GM12878 (cell line): ENCODE measurements at regions of chr7 and their contacts with region 1.

Region 1: DNA sequence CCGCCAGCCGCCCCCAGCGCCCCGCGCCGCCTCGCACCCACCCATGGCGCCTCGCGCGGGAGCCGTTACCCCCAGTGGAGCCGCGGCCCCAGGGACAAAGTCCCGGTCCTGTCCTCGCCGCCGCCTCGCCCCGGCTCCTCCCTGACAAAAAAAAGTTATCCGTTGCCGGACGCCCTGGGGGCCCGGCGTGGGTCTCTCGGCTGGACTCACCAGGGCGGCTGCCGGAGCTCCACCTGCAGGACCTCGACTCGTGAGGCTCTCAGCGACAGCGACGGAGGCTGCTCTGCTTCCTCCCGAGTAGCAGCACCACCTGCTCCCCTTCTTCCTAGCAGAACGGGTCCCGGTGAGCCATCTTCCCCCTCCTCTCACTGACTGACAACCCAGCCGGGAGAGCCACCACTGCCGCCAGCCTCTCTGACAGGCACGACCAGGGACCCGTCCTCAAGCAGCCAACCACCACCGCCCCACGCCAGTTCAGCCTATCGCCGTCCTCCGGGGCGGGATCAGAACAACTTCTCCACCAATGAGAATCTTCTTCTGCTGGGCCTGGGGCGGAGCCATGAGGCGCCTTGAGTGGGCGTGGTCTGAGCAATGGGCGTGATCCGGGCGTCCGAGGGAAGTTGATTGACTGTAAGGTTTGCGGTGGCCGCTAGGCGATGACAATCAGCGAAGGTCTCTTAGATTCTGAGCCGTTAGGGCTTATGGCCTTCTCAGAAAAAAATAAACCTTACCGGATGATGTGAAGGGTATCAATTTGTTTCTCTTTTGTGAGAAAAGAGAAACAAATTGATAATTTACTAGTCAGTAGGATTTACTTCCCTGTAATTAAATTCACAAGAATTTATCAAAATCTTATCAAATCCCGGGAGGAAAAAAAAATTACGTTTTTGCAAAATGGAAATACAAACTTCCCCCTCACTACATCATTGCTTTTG is at the start of gene HYCC1:
- DNase-seq: peak; percentile 98
- ATAC-seq: peak; percentile 94
- H3K4me3 ChIP-seq: peak within 1 kb of the TSS; percentile 95
- H3K27ac ChIP-seq: peak within 1 kb of the TSS; percentile 74
- H3K4me1 ChIP-seq: peaks cover 20% of the 10 kb centered on the region
- H3K27me3 ChIP-seq: no peaks in the 10 kb centered on the region
- CTCF ChIP-seq: peak; percentile 62 to 64 (median 64)
- EP300 ChIP-seq: no peak
- POLR2A ChIP-seq: peak; percentile 99
- RAD21 ChIP-seq: peak; percentile 34; the same call in 1 of the 2 replicates
- polyA plus RNA-seq, gene HYCC1: 8.5 to 9.9 TPM

Region 2: DNA sequence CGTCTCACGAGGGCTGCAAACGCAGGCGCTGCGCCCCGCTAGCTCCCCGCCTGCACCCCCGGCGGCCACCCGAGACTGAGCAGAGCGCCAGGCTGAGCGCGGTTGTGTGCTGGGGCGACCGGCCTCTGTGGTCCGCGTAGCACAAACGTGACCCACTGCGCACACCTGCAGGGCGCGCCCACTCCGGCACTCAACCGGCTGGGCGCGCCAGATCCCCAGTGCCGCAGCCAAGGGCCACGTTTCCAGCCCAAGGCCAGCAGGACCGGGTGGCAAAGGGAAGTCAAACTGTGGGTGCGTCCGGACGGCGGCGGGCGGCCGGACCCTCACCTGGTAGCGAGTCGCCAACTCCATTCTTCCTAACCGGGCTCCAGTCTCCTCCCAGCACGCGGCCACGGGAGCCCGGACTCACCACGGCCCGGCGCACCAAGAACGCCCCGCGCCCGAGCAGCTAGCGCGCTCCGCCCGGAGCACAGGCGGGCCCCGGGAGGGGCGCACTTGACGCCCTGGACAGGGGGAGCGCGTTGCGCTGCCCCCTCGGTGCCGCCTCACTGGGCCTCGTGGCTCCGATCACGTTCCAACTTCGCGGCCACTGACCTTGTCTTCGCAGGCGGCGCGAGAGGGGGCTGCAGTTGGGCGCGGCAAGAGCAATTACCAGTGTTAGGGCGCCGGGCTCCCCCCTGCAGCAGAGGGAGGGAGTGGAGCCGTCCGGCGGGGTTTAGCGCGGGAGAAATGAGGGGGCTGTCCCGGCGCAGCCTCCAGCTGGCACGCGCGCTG is 1068.3 kb before region 1 on chr7 and contains the start of gene CDCA7L:
- CTCF ChIA-PET with region 1: no interaction called
- POLR2A ChIA-PET with region 1: no interaction called
- RAD21 ChIA-PET with region 1: no interaction called
- SMC1A ChIA-PET with region 1: no interaction called
- in situ Hi-C with region 1: loop called (anchors 10 kb)
- intact Hi-C with region 1: no loop called
- DNase-seq: peak; percentile 32
- ATAC-seq: peak; percentile 85
- H3K4me3 ChIP-seq: peak within 1 kb of the TSS; percentile 80
- H3K27ac ChIP-seq: peak within 1 kb of the TSS; percentile 85
- H3K4me1 ChIP-seq: peaks cover 44% of the 10 kb centered on the region
- H3K27me3 ChIP-seq: no peaks in the 10 kb centered on the region
- CTCF ChIP-seq: 0 out of 6 replicates have a peak, but pooled peaks of 1 of the 3 experiments have one; percentile 2
- EP300 ChIP-seq: no peak
- POLR2A ChIP-seq: peak; percentile 93
- RAD21 ChIP-seq: peak; percentile 20; the same call in 1 of the 2 replicates
- polyA plus RNA-seq, gene CDCA7L: 30.3 to 45.2 TPM

Region 3: GRCh38 chr7:22435105-22435504 is 578.9 kb before region 1 on chr7:
- CTCF ChIA-PET with region 1: no interaction called
- POLR2A ChIA-PET with region 1: no interaction called
- RAD21 ChIA-PET with region 1: no interaction called
- SMC1A ChIA-PET with region 1: no interaction called
- in situ Hi-C with region 1: no loop called
- intact Hi-C with region 1: no loop called
- DNase-seq: peak; percentile 68
- ATAC-seq: peak; percentile 87
- H3K4me3 ChIP-seq: peak overlapping the region; percentile 28; the same call in 1 of the 2 replicates
- H3K27ac ChIP-seq: peak overlapping the region; percentile 17; the same call in 1 of the 2 replicates
- H3K4me1 ChIP-seq: peaks cover 18% of the 10 kb centered on the region
- H3K27me3 ChIP-seq: no peaks in the 10 kb centered on the region
- CTCF ChIP-seq: no peak
- EP300 ChIP-seq: 0 out of 4 replicates have a peak, but pooled peaks of 1 of the 2 experiments have one; percentile 12
- POLR2A ChIP-seq: no peak
- RAD21 ChIP-seq: no peak

Region 4: DNA sequence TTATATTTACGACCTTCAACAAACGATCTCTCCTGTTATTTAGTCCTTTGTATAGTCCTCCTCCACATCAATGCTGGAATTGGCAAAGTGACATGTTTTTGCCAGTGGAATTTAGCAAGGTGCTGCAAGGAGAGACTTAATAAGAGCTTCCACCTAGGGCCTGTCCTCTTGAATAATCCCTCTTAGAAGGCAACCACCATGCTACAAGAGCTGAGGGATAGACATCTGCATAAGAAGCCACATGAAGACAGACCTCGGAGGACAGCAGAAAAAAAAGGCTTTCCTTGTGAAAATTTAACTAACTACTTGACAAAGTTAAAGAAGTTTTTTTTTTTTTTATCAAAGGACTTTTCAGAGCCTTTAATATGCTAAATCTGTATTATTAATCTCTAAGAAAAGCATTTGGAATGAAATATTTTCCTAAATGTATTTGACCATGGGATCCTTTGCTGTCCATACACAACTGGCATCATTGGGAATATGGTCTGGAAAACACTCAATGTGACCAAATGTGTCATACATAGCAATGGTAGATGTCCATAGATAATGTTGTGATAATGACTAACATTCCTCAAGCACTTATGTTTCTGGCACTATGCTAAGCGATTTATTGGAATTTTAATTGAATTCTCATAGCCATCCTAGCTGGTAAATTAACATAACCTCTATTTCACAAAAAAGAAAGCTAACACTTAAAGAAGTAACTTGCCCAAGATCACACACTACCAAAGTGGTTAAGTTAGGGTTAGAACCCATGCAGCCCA is 13.2 kb before region 1 on chr7:
- CTCF ChIA-PET with region 1: interaction called, 6 read pairs
- POLR2A ChIA-PET with region 1: interaction called, 19 read pairs
- RAD21 ChIA-PET with region 1: interaction called, 38 read pairs
- SMC1A ChIA-PET with region 1: interaction called, 60 read pairs
- in situ Hi-C with region 1: no loop called
- intact Hi-C with region 1: no loop called
- DNase-seq: no peak
- ATAC-seq: no peak
- H3K4me3 ChIP-seq: no peak overlapping the region
- H3K27ac ChIP-seq: peak overlapping the region; percentile 83
- H3K4me1 ChIP-seq: peaks cover 39% of the 10 kb centered on the region
- H3K27me3 ChIP-seq: no peaks in the 10 kb centered on the region
- CTCF ChIP-seq: no peak
- EP300 ChIP-seq: no peak
- POLR2A ChIP-seq: no peak
- RAD21 ChIP-seq: no peak

Region 5: GRCh38 chr7:23117841-23118240 is 103.9 kb after region 1 on chr7:
- CTCF ChIA-PET with region 1: no interaction called
- POLR2A ChIA-PET with region 1: no interaction called
- RAD21 ChIA-PET with region 1: no interaction called
- SMC1A ChIA-PET with region 1: no interaction called
- in situ Hi-C with region 1: no loop called
- intact Hi-C with region 1: no loop called
- DNase-seq: no peak
- ATAC-seq: no peak
- H3K4me3 ChIP-seq: no peak overlapping the region
- H3K27ac ChIP-seq: no peak overlapping the region
- H3K4me1 ChIP-seq: no peaks in the 10 kb centered on the region
- H3K27me3 ChIP-seq: no peaks in the 10 kb centered on the region
- CTCF ChIP-seq: no peak
- EP300 ChIP-seq: no peak
- POLR2A ChIP-seq: no peak
- RAD21 ChIP-seq: no peak